Prostate gland (tissue), 2 donors: ENCODE measurements at regions of chr3 and their contacts with region 1.

Region 1: GRCh38 chr3:141441381-141442364 is 45.2 kb upstream of the RASA2 start:
- DNase-seq: no peak
- H3K4me3 ChIP-seq: no peak overlapping the region
- H3K27ac ChIP-seq: peak overlapping the region; percentile 60 to 62
- H3K4me1 ChIP-seq: peaks cover 7% of the 10 kb centered on the region
- H3K27me3 ChIP-seq: no peaks in the 10 kb centered on the region
- CTCF ChIP-seq: peak in 3 of 4 experiments; percentile 41 to 73 (median 60)
- POLR2A ChIP-seq: no peak

Region 2: DNA sequence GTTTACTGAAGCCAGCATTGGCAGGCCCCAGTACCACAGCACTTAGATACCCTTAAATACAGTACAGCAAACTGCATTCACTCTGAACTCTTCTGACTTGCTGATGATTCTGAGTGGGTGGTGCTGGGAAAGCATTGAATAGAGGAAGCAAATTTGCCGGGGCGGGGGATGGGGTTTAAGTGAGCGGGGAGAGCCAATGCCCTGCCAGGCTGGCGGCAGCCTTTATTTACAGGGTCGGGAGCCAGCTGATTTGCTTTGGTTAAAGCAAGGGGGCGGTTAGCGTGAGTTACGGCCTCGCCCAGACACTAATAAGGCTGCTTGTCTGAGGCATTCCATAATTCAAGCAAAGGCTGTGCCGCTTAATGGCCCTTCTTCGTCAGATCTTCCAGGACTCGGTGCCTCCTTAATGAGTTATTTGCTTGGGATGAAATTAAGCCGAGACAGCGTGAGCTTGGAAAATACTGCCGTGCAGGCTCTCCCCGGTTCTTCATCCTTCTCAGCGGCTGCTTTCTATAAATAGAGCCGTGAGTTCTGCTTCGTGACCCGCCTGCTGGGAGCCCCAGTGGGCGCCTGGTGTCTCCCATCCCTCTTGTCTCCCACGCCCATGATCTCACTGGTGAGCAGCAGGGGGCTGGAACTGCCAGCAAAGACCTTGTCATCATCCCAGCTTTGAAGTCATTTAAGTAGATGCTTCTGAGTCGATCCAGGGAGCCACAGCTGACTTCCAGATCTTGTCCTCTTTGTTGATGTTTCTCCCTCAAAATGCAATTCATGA is 364.7 kb before region 1 on chr3:
- intact Hi-C with region 1: no loop called
- DNase-seq: no peak
- H3K4me3 ChIP-seq: no peak overlapping the region
- H3K27ac ChIP-seq: no peak overlapping the region
- H3K4me1 ChIP-seq: no peaks in the 10 kb centered on the region
- H3K27me3 ChIP-seq: no peaks in the 10 kb centered on the region
- CTCF ChIP-seq: no peak
- POLR2A ChIP-seq: no peak

Region 3: GRCh38 chr3:141368062-141368924 is 73.4 kb before region 1 on chr3 and contains the start of gene ZBTB38:
- intact Hi-C with region 1: loop called (anchors 5 kb)
- DNase-seq: peak; percentile 75
- H3K4me3 ChIP-seq: peak within 1 kb of the TSS in 1 of 2 donors; percentile 16
- H3K27ac ChIP-seq: peak within 1 kb of the TSS; percentile 89 to 92
- H3K4me1 ChIP-seq: peaks cover 22% of the 10 kb centered on the region
- H3K27me3 ChIP-seq: no peaks in the 10 kb centered on the region
- CTCF ChIP-seq: no peak
- POLR2A ChIP-seq: peak; percentile 69
- total RNA-seq, gene ZBTB38: 151 to 169 TPM

Region 4: GRCh38 chr3:141402476-141403171 is 39.0 kb before region 1 on chr3:
- intact Hi-C with region 1: loop called (anchors 5 kb)
- DNase-seq: peak; percentile 75
- H3K4me3 ChIP-seq: peak overlapping the region; percentile 79 to 83
- H3K27ac ChIP-seq: peak overlapping the region; percentile 97 to 99
- H3K4me1 ChIP-seq: peaks cover 3% of the 10 kb centered on the region
- H3K27me3 ChIP-seq: no peaks in the 10 kb centered on the region
- CTCF ChIP-seq: no peak
- POLR2A ChIP-seq: peak; percentile 53

Region 5: DNA sequence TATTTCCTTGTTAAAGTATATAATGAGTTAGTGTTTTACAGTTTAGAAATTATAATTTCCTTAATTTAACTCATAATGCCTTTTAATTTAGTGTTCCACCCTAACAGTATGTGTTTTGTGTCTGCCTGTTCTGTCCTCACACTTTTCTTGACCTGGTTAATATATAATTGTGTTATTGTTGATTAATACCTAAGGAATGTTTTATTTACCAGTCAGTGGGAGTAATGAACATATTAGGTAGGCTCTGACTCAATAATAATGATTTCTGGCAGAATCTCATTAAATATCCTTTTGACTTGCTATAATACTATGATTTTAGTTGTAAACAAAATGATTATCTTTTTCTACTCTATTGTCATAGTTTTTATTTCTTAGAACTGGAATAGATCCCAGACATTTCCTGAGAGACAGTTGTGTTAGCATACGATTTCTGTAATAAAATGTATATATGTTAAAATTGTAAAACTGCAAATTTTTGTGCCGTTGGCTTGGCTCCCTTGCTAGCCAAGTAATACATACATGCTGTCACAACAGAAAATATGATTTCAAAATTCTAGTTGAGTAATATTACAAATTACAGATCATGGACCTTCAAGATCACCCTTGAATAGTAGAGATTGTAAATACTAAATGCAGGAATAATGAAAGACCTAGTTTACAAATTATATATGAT is 97.0 kb after region 1 on chr3:
- intact Hi-C with region 1: no loop called
- DNase-seq: no peak
- H3K4me3 ChIP-seq: no peak overlapping the region
- H3K27ac ChIP-seq: no peak overlapping the region
- H3K4me1 ChIP-seq: no peaks in the 10 kb centered on the region
- H3K27me3 ChIP-seq: no peaks in the 10 kb centered on the region
- CTCF ChIP-seq: no peak
- POLR2A ChIP-seq: no peak